ENCODE measurements at regions of chr1 and their contacts with region 1.

Region 1: DNA sequence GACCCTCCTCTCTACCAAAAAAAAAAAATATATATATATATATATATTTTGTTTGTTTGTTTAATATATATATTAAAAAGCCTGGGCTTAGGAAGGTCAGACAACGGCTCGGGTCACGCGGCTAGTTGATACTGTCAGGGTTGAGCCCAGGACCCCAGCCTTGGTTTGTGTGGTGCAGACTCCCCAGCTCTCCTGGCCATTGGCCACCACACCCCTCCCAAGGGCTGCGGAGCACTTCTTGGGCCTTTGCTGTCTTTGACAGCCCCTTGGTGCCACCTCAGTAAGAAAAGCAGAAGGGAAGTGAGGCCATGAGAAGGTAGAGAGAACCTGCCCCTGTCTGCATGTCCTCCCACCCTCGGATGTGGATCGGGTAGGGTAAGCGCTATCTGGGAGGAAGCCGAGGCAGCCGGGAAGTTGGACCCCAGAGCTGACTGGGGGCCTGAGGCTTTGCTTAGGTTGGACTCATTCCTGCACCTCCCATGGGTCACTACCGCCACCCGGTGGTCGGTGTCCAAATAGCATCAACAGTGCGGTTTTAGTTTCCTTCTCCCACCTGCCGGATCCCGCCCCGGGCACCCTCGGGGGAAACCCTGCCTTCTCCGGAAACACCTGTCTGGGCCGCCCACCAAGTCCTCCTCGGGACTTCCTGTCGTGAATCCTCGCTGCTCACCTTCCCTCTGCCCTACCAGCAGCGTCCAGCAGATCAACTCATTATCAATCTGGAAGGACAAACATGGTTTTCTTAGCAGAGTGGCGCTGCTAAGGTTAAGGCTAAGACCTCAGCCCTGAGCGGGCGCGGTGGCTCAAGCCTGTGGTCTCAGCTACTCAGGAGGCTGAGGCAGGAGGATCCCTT is 29.8 kb upstream of the GNPAT start:
- DNase-seq: peak; percentile 90
- ATAC-seq: peak; percentile 89
- H3K4me3 Mint-ChIP-seq: peak overlapping the region; percentile 93
- H3K27ac Mint-ChIP-seq: peak overlapping the region; percentile 85
- H3K4me1 Mint-ChIP-seq: peaks cover 37% of the 10 kb centered on the region
- H3K27me3 Mint-ChIP-seq: no peaks in the 10 kb centered on the region
- CTCF ChIP-seq: peak; percentile 46

Region 2: DNA sequence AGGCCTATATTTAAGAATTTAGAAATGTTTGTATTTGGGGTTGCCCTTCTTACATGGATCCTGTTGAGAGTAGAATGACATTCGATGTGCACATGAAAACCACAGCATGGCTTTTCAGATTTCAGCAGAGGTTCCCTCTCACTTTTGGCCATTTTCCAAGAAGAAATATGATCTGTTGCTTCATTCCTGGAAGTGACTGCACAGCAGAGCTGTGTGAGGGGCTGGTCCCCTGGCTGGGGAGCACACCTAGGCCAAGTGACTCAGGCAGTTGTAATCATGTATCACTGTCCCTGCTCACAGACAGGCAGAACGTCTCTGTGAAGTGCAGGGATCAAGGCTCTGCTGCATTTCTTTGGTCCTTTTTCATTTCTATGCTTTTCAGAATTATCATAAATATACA is 529.6 kb before region 1 on chr1:
- CTCF ChIA-PET with region 1: no interaction called
- POLR2A ChIA-PET with region 1: no interaction called
- intact Hi-C with region 1: loop called (anchors 2 kb)
- DNase-seq: no peak
- ATAC-seq: no peak
- H3K4me3 Mint-ChIP-seq: no peak overlapping the region
- H3K27ac Mint-ChIP-seq: no peak overlapping the region
- H3K4me1 Mint-ChIP-seq: no peaks in the 10 kb centered on the region
- H3K27me3 Mint-ChIP-seq: no peaks in the 10 kb centered on the region
- CTCF ChIP-seq: no peak

Region 3: DNA sequence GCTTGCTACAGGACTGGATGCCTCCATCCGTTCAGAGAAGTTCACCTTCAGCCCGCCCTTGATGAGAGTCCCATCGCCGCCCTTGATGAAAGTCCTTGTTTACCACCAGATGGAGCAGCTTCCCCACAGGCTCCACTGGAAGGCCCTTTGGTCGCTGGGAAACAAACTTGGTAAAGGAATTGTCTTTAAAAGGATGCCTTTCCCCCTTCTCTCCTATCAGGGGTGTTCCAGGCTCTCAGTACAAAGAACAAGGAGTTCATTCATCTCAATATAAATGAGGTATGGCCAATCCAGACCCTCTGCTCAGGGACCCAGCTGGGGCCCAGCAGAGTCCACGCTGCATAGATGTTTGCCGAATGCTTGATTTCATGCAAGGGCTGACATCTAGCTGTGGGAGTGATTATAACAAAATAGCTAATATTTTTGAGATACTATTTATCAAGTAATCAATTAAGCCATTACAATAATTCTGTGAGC is 413.3 kb before region 1 on chr1:
- CTCF ChIA-PET with region 1: no interaction called
- POLR2A ChIA-PET with region 1: no interaction called
- intact Hi-C with region 1: loop called (anchors 1 kb)
- DNase-seq: no peak
- ATAC-seq: no peak
- H3K4me3 Mint-ChIP-seq: no peak overlapping the region
- H3K27ac Mint-ChIP-seq: no peak overlapping the region
- H3K4me1 Mint-ChIP-seq: no peaks in the 10 kb centered on the region
- H3K27me3 Mint-ChIP-seq: peaks cover 21% of the 10 kb centered on the region
- CTCF ChIP-seq: no peak

Region 4: GRCh38 chr1:230917284-230918135 is 293.7 kb before region 1 on chr1:
- CTCF ChIA-PET with region 1: interaction called, 6 read pairs
- POLR2A ChIA-PET with region 1: no interaction called
- intact Hi-C with region 1: loop called (anchors 1 kb)
- DNase-seq: peak; percentile 36
- ATAC-seq: peak; percentile 79
- H3K4me3 Mint-ChIP-seq: no peak overlapping the region
- H3K27ac Mint-ChIP-seq: peak overlapping the region; percentile 11
- H3K4me1 Mint-ChIP-seq: no peaks in the 10 kb centered on the region
- H3K27me3 Mint-ChIP-seq: no peaks in the 10 kb centered on the region
- CTCF ChIP-seq: peak; percentile 52

Region 5: GRCh38 chr1:231040019-231040799 is 171.0 kb before region 1 on chr1 and contains the start of gene FAM89A:
- CTCF ChIA-PET with region 1: no interaction called
- POLR2A ChIA-PET with region 1: interaction called, 3 read pairs
- intact Hi-C with region 1: loop called (anchors 1 kb)
- DNase-seq: peak; percentile 70
- ATAC-seq: peak; percentile 84
- H3K4me3 Mint-ChIP-seq: peak within 1 kb of the TSS; percentile 85
- H3K27ac Mint-ChIP-seq: peak within 1 kb of the TSS; percentile 35
- H3K4me1 Mint-ChIP-seq: peaks cover 17% of the 10 kb centered on the region
- H3K27me3 Mint-ChIP-seq: peaks cover 4% of the 10 kb centered on the region
- CTCF ChIP-seq: no peak
- total RNA-seq, gene FAM89A: 5.2 and 5.3 TPM in 2 replicates

Region 6: DNA sequence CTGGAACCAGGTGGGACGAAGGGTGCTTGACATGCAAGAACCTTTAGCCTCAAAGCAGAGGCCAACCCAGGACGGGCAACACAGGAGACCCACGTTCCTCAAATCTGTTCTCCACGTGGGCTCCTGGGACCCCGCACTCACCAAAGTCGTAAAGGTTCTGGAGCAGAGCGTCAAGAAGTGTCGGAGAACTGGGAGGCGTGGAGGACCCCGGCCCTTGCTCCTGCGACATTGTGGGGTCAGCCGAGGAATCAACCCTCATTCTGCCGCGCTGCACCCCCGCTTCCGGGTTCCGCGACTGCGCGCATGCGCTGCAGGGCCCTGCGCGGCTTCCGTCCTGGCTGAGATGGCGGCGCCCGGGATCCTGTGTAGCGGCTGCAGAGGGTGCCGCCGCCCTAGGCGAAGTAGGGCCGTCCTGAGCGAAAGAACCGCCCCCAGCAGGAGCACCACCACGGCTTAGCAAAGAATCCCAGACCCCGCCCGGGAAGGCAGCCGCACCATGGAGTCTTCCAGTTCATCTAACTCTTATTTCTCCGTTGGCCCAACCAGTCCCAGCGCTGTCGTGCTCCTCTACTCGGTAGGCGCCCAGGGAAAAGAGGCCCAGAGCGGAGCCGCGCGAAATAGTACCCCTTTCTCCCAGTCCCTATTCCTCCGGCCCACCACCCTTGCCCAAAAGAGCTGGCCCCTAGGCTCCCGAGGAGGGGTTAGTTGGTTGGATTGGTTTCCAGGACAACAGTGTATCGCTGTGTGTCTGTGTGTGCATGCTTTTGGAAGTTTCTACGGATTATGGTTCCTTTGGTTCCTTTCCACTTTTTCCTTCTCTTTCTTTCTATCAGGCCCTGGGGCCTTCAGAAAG is 29.9 kb after region 1 on chr1 and contains the start of gene GNPAT:
- CTCF ChIA-PET with region 1: no interaction called
- POLR2A ChIA-PET with region 1: interaction called, 12 read pairs
- intact Hi-C with region 1: loop called (anchors 1 kb)
- DNase-seq: peak; percentile 94
- ATAC-seq: peak; percentile 98
- H3K4me3 Mint-ChIP-seq: peak within 1 kb of the TSS; percentile 93
- H3K27ac Mint-ChIP-seq: peak within 1 kb of the TSS; percentile 94
- H3K4me1 Mint-ChIP-seq: peaks cover 58% of the 10 kb centered on the region
- H3K27me3 Mint-ChIP-seq: no peaks in the 10 kb centered on the region
- CTCF ChIP-seq: no peak
- total RNA-seq, gene GNPAT: 45.7 and 47.4 TPM in 2 replicates